ENCODE measurements at regions of chr2 and their contacts with region 1.

Region 1: DNA sequence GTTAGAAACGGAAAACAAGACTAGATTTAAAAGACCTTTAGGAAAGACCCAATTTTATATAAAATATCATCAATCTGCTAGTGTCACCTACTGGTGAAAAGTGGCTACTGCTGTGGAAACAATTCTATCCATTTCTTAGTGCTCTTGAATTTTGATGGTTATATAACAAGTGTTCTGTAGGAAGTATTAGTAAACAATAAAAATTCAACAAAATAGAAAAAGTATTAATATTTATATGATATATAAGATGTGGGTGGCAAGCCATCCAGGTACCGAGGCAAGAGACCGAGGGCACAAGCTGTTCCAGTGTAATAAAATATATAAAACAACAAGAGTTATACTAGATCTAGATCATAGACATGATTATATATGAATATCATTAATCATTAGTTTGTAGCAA is 6.2 kb upstream of the TMEM87B start:
- DNase-seq: no peak
- ATAC-seq: peak; percentile 88
- H3K4me3 Mint-ChIP-seq: no peak overlapping the region
- H3K27ac Mint-ChIP-seq: no peak overlapping the region
- H3K4me1 Mint-ChIP-seq: peaks cover 7% of the 10 kb centered on the region
- H3K27me3 Mint-ChIP-seq: peaks cover 5% of the 10 kb centered on the region
- CTCF ChIP-seq: peak; percentile 55

Region 2: DNA sequence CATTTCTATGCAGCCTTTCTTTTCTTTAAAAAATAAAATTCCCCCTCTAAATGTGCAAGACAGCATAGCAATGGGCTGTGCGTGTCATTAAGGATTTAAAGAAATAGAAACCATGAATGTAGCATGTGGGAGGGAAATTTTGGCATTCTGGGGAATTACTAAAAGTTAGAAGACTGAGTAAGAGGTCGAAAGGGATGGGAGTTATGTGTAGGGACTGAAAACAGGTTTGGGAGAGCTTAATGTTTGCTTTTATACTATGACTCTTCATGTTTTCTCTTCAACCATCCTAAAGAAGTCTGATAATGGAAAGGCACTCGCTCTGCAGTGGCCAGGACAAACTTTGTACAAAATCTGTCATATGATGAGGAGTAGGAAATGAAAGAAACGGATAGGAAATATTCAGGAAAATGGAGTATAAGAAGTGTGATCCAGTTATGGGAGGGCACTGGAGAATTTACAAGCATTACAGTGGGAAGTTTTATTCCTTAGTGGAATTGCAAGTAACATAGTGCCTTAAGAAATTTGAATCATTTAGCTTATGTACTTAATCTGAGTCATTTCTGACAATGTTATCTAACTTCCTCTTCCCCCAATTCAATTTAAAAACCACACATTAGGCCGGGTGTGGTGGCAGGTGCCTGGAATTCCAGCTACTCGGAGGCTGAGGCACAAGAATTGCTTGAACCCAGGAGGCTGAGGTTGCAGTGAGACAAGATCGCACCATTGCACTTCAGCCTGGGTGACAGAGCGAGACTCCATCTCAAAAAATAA is 26.8 kb after region 1 on chr2:
- CTCF ChIA-PET with region 1: no interaction called
- POLR2A ChIA-PET with region 1: no interaction called
- intact Hi-C with region 1: no loop called
- DNase-seq: no peak
- ATAC-seq: peak; percentile 37
- H3K4me3 Mint-ChIP-seq: no peak overlapping the region
- H3K27ac Mint-ChIP-seq: peak overlapping the region; percentile 30
- H3K4me1 Mint-ChIP-seq: peaks cover 27% of the 10 kb centered on the region
- H3K27me3 Mint-ChIP-seq: no peaks in the 10 kb centered on the region
- CTCF ChIP-seq: no peak

Region 3: GRCh38 chr2:112433932-112434730 is 385.2 kb after region 1 on chr2:
- CTCF ChIA-PET with region 1: no interaction called
- POLR2A ChIA-PET with region 1: interaction called, 10 read pairs
- intact Hi-C with region 1: no loop called
- DNase-seq: no peak
- ATAC-seq: no peak
- H3K4me3 Mint-ChIP-seq: no peak overlapping the region
- H3K27ac Mint-ChIP-seq: no peak overlapping the region
- H3K4me1 Mint-ChIP-seq: peaks cover 8% of the 10 kb centered on the region
- H3K27me3 Mint-ChIP-seq: peaks cover 7% of the 10 kb centered on the region
- CTCF ChIP-seq: no peak

Measured in activated B cell treated with CpG ODN at 0.5 μM for 24 hours (primary cell).